ENCODE measurements at regions of chr10 and their contacts with region 1.

Region 1: DNA sequence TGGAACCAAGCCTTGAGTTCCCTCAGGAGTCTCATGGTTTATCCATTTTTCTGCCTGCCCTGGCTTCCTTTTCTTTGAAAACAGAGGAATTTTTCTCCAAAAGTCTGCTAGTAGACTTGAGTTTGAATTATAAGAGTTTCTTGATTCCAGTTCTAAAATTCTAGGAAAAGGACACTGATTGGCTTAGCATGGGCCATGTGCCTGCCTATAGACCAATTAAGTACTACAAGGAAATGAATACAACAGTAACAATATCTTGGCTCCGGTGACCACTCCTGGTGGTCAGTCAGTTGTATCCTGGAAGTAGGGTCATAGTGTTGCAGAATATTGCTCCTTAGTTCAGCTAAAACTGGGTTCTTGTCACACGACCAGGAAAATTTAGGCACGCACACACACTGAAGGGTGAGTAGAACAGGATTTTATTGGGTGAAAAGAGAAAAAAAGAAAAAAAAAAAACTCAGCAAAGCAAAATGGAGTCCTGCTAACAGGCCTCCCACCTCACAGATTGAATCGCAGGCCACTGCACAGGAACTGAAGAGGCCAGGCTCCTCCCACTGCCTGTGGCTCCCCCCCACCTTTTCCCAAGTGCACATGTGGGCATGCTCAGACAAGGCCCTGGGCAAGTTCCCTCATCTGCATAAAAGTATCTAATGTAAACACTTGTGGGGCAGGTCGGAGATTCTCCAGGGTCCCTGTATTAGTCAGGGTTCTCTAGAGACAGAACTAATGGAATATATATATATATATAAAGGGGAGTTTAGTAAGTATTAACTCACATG is 155.1 kb downstream of the LYZL1 start:
- DNase-seq: no peak
- ATAC-seq: no peak
- H3K4me3 ChIP-seq: no peak overlapping the region
- H3K27ac ChIP-seq: no peak overlapping the region
- H3K4me1 ChIP-seq: peaks cover 0 to 27% (median 14%) of the 10 kb centered on the region in 9 donors
- H3K27me3 ChIP-seq: no peaks in the 10 kb centered on the region
- CTCF ChIP-seq: no peak

Region 2: DNA sequence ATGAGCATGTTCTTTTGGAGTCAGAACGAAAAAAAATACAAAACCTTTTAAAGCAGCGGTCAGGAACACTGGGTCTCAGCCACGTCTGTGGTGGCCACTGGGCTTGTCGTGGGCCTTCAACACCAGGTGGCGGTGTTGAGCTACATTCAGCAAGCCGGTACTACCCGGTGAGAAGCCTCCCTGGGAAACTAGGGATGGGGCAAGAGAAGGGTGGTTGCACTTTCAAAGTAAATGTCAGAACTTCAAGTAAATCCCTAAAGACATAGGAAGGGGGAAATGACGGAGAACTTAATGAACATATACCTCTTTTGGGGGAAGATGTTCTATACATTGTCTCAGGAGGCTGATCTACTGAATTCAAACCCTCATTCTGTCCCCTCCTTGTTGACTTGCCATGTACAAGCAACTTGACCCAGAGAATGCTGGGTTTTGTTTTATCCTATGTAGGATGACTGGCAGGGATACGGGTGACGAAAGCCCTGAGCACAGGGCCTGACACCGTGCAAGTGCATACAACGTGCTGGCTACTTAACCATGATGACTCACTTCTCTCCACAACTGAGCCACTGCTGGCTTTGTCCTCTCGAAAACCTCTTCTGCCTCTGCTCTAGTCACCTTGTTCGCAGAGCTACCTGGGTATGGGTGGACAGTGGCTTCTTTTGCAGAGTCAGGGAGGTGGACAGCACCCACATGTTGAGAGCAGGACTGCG is 815.6 kb before region 1 on chr10:
- intact Hi-C with region 1: loop called in 1 of 10 experiments (anchors 5 kb)
- DNase-seq: peak; percentile 71 to 76
- ATAC-seq: peak; percentile 85 to 94 (median 90)
- H3K4me3 ChIP-seq: no peak overlapping the region
- H3K27ac ChIP-seq: no peak overlapping the region
- H3K4me1 ChIP-seq: peaks cover 0 to 9% (median 0%) of the 10 kb centered on the region in 9 donors
- H3K27me3 ChIP-seq: peaks cover 0 to 19% (median 0%) of the 10 kb centered on the region in 7 donors
- CTCF ChIP-seq: peak; percentile 74 to 93 (median 91)

Region 3: GRCh38 chr10:29377333-29377961 is 66.5 kb before region 1 on chr10:
- intact Hi-C with region 1: loop called in 1 of 10 experiments (anchors 5 kb)
- DNase-seq: no peak
- ATAC-seq: peak in 1 of 8 donors; percentile 24
- H3K4me3 ChIP-seq: no peak overlapping the region
- H3K27ac ChIP-seq: no peak overlapping the region
- H3K4me1 ChIP-seq: no peaks in the 10 kb centered on the region
- H3K27me3 ChIP-seq: no peaks in the 10 kb centered on the region
- CTCF ChIP-seq: peak; percentile 50 to 78 (median 71)

Region 4: DNA sequence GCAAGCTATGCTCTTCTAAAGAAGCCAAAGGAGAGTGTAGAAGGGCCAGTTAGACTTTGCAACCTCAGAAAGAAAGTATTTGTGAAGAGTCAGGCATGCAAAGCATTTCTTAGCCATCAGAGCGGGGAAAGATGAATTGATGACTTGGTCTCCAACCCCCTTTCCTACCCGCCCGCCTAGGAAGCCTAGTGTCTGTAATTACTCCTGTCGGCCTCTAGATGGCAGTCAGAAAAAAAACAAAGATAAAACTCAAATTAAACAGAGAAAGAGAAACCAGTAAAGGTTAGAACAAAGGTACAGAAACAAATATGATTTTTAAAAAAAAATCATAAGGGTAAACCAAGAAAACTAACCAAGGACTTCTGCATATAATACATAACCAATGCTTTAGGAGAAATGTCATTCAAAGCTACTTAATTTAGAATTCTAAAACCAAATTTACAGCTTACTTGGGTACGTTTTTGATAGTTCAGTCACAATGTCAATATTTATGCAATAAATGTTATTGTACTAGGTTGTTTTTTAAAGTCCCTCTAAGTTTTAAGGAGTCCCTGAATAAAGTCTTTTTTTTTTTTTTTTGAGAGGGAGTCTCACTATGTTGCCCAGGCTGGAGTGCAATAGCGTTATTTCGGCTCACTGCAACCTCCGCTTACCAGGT is 57.5 kb before region 1 on chr10:
- intact Hi-C with region 1: loop called in 8 of 10 experiments (anchors 2 to 10 kb)
- DNase-seq: no peak
- ATAC-seq: peak in 2 of 8 donors; percentile 16 to 48
- H3K4me3 ChIP-seq: no peak overlapping the region
- H3K27ac ChIP-seq: no peak overlapping the region
- H3K4me1 ChIP-seq: peaks cover 0 to 5% (median 0%) of the 10 kb centered on the region in 9 donors
- H3K27me3 ChIP-seq: no peaks in the 10 kb centered on the region
- CTCF ChIP-seq: peak; percentile 52 to 83 (median 80)

Region 5: GRCh38 chr10:29392376-29393021 is 51.4 kb before region 1 on chr10:
- intact Hi-C with region 1: loop called in 9 of 10 experiments (anchors 2 to 10 kb)
- DNase-seq: peak in 1 of 2 donors; percentile 15
- ATAC-seq: peak in 2 of 8 donors; percentile 42 to 67
- H3K4me3 ChIP-seq: no peak overlapping the region
- H3K27ac ChIP-seq: no peak overlapping the region
- H3K4me1 ChIP-seq: no peaks in the 10 kb centered on the region
- H3K27me3 ChIP-seq: no peaks in the 10 kb centered on the region
- CTCF ChIP-seq: peak; percentile 55 to 83 (median 74)

Region 6: DNA sequence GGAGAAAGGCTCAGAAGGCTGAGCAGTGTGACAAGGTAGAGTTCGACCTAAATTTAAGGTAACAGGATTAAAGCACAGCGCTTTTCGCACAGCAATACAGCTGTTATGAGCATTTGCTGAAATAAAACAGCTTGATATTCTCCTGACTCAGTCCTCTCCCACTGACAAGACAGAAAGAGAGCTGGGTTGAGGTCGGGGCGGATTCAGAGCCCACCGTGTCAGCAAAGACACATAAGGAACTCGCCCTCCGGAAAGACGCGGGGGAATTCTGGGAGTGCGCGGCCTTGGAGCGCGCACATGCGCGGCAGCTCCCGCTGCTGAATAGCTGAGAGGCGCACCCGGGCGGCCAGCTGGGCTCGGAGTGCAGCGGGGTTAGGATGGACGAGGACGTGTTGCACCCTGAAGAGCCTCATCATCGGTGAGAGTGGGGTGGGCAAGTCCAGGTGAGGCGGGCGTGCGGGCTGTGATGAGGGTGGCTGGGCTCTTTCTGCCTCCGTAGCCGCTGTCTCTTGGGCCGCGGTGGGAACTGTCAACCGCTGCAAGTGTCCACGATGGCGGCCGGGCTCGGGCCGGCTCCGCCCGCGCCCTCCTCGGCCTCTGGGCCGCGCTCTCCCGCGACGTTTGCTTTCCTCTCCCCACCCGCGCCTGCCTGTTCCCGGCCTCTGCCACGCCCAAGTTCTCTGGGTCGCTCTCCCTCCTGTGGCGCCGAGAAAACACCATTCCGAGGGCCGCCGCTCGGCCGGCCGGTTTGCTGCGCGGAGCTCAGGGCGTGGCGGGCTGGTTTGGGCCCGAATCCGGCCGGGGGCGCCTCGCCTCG is 34.5 kb before region 1 on chr10:
- intact Hi-C with region 1: loop called in 1 of 10 experiments (anchors 5 kb)
- DNase-seq: peak; percentile 79 to 82
- ATAC-seq: peak; percentile 95 to 98 (median 97)
- H3K4me3 ChIP-seq: peak overlapping the region; percentile 48 to 89 (median 76)
- H3K27ac ChIP-seq: peak overlapping the region; percentile 83 to 98 (median 92)
- H3K4me1 ChIP-seq: peaks cover 0 to 50% (median 47%) of the 10 kb centered on the region in 9 donors
- H3K27me3 ChIP-seq: no peaks in the 10 kb centered on the region
- CTCF ChIP-seq: peak in 4 of 9 donors; percentile 6 to 36 (median 28)

Region 7: GRCh38 chr10:29482591-29483431 is 38.9 kb after region 1 on chr10:
- intact Hi-C with region 1: no loop called
- DNase-seq: no peak
- ATAC-seq: peak; percentile 32 to 73 (median 60)
- H3K4me3 ChIP-seq: no peak overlapping the region
- H3K27ac ChIP-seq: peak overlapping the region in 3 of 10 donors; percentile 4 to 23 (median 5)
- H3K4me1 ChIP-seq: peaks cover 2 to 45% (median 20%) of the 10 kb centered on the region in 9 donors
- H3K27me3 ChIP-seq: no peaks in the 10 kb centered on the region
- CTCF ChIP-seq: no peak

Measured in heart right ventricle (tissue), 16 donors.